ENCODE measurements at regions of chr16 and their contacts with region 1.

Region 1: GRCh38 chr16:714558-715476 is at the start of gene METRN:
- DNase-seq: peak; percentile 85
- H3K4me3 ChIP-seq: peak within 1 kb of the TSS; percentile 51 to 55
- H3K27ac ChIP-seq: no peak within 1 kb of the TSS
- H3K4me1 ChIP-seq: peaks cover 15% of the 10 kb centered on the region
- H3K27me3 ChIP-seq: peaks cover 5% of the 10 kb centered on the region
- CTCF ChIP-seq: no peak
- POLR2A ChIP-seq: no peak
- total RNA-seq, gene METRN: 52.0 to 78.2 TPM

Region 2: GRCh38 chr16:200388-200787 is 514.4 kb before region 1 on chr16:
- intact Hi-C with region 1: no loop called
- DNase-seq: no peak
- H3K4me3 ChIP-seq: no peak overlapping the region
- H3K27ac ChIP-seq: no peak overlapping the region
- H3K4me1 ChIP-seq: no peaks in the 10 kb centered on the region
- H3K27me3 ChIP-seq: no peaks in the 10 kb centered on the region
- CTCF ChIP-seq: no peak
- POLR2A ChIP-seq: no peak

Region 3: DNA sequence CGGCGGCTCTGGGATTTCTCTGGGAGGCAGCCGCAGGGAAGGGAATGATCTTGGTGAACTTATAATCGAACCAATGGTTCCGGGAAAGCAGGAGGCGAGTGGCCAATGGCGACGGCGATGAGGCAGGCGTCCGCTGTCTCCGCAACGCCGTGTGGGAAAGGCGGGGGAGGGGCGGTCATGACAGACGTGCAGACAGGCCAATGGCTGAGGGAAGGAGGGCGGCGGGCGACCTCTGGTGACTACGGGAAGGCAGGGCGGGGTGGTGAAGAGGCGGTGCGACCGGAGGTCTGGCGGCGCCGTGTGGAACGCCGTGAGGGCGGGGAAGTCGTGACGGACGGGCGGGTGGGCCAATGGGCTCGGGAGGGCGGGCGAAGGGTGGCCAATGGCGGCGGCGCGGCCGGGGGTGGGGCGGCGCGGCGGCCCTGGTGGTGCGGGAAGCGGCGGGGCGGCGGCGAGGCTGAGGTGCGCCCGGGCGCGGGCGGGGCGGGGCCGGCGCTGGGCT is 125.1 kb before region 1 on chr16 and contains the start of gene RAB40C:
- intact Hi-C with region 1: no loop called
- DNase-seq: peak; percentile 99
- H3K4me3 ChIP-seq: peak within 1 kb of the TSS; percentile 70 to 87
- H3K27ac ChIP-seq: peak within 1 kb of the TSS; percentile 95 to 98
- H3K4me1 ChIP-seq: peaks cover 16% of the 10 kb centered on the region
- H3K27me3 ChIP-seq: no peaks in the 10 kb centered on the region
- CTCF ChIP-seq: peak in 1 of 4 experiments; percentile 22
- POLR2A ChIP-seq: no peak
- total RNA-seq, gene RAB40C: 41.8 to 68.0 TPM

Region 4: GRCh38 chr16:788394-789126 is 73.7 kb after region 1 on chr16 and contains the start of gene CHTF18:
- intact Hi-C with region 1: loop called (anchors 5 kb)
- DNase-seq: peak; percentile 91
- H3K4me3 ChIP-seq: peak within 1 kb of the TSS; percentile 91 to 99
- H3K27ac ChIP-seq: peak within 1 kb of the TSS; percentile 39 to 53
- H3K4me1 ChIP-seq: peaks cover 5% of the 10 kb centered on the region
- H3K27me3 ChIP-seq: no peaks in the 10 kb centered on the region
- CTCF ChIP-seq: no peak
- POLR2A ChIP-seq: peak; percentile 17
- total RNA-seq, gene CHTF18: 7.8 to 57.5 TPM

Region 5: DNA sequence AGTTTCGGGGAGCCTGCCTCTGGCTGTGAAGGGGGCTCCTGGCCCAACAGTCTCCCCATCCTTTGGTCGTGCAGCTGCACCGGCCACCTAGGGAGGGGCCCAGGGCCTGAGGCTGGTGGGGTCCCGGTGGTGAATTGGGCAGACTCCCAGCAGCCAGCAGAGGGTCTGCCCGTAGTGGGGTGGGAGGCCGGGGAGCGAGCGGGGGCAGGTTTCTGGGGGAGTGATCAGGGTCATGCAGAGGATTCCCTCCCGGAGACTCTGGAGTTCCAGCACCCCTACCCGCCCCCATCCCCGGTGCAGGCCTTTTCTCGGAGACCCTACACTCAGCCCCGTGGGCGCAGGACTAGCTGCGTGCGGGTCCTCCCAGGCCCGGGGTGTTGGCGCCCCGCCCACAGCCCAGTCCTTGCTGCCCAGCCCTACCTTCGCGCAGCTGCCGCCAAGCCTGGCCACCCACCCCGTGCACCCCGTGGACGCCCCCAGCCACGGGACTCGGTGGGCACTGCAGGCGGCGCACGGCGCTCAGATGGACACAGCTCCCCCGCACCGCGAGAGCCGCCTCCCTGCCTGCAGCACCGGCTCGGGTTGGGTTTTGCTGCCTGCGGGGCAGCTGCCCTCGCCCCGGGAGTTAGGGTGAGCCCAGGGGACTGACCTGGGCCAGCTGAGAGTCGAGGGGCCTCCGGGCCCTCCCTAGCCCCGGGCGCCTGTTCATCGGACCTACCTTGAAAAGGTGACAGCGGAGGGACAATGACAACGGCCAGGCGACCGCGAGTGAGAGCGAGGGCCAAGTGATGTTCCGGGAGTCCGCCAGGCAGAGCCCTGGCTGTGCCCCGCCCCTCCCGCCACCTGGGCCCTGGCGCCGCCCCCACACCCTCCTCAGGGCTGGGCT is 85.4 kb after region 1 on chr16 and contains the start of gene GNG13:
- intact Hi-C with region 1: no loop called
- DNase-seq: no peak
- H3K4me3 ChIP-seq: no peak within 1 kb of the TSS
- H3K27ac ChIP-seq: no peak within 1 kb of the TSS
- H3K4me1 ChIP-seq: no peaks in the 10 kb centered on the region
- H3K27me3 ChIP-seq: peaks cover 19% of the 10 kb centered on the region
- CTCF ChIP-seq: no peak
- POLR2A ChIP-seq: no peak
- total RNA-seq, gene GNG13: not detected

Region 6: GRCh38 chr16:832652-833336 is 118.0 kb after region 1 on chr16:
- intact Hi-C with region 1: no loop called
- DNase-seq: no peak
- H3K4me3 ChIP-seq: no peak overlapping the region
- H3K27ac ChIP-seq: no peak overlapping the region
- H3K4me1 ChIP-seq: no peaks in the 10 kb centered on the region
- H3K27me3 ChIP-seq: no peaks in the 10 kb centered on the region
- CTCF ChIP-seq: no peak
- POLR2A ChIP-seq: no peak

Region 7: GRCh38 chr16:1054660-1055556 is 340.1 kb after region 1 on chr16:
- intact Hi-C with region 1: loop called (anchors 5 kb)
- DNase-seq: peak; percentile 35
- H3K4me3 ChIP-seq: no peak overlapping the region
- H3K27ac ChIP-seq: no peak overlapping the region
- H3K4me1 ChIP-seq: peaks cover 3% of the 10 kb centered on the region
- H3K27me3 ChIP-seq: no peaks in the 10 kb centered on the region
- CTCF ChIP-seq: peak; percentile 44 to 92 (median 87)
- POLR2A ChIP-seq: no peak

Measured in prostate gland (tissue), 2 donors.